ENCODE measurements at regions of chr22 and their contacts with region 1.

Region 1: GRCh38 chr22:21938071-21938822 is 14.4 kb downstream of the PPM1F start:
- DNase-seq: peak; percentile 92 to 98 (median 96)
- H3K4me3 ChIP-seq: peak overlapping the region; percentile 13 to 57 (median 28)
- H3K27ac ChIP-seq: peak overlapping the region; percentile 87 to 98 (median 93)
- H3K4me1 ChIP-seq: peaks cover 39 to 65% of the 10 kb centered on the region in 2 donors
- H3K27me3 ChIP-seq: no peaks in the 10 kb centered on the region
- CTCF ChIP-seq: peak; percentile 96 to 100 (median 100)
- POLR2A ChIP-seq: peak; percentile 6 to 46

Region 2: GRCh38 chr22:21712894-21713712 is 225.1 kb before region 1 on chr22:
- intact Hi-C with region 1: loop called (anchors 5 to 10 kb)
- DNase-seq: peak; percentile 71 to 91 (median 78)
- H3K4me3 ChIP-seq: peak overlapping the region in 1 of 4 donors; percentile 14
- H3K27ac ChIP-seq: peak overlapping the region in 1 of 5 donors; percentile 32
- H3K4me1 ChIP-seq: peaks cover 0 to 12% of the 10 kb centered on the region in 2 donors
- H3K27me3 ChIP-seq: no peaks in the 10 kb centered on the region
- CTCF ChIP-seq: peak; percentile 46 to 96 (median 78)
- POLR2A ChIP-seq: no peak

Region 3: GRCh38 chr22:21778705-21779363 is 159.4 kb before region 1 on chr22:
- intact Hi-C with region 1: loop called in 1 of 2 experiments (anchors 10 kb)
- DNase-seq: peak in 2 of 7 donors; percentile 18 to 36
- H3K4me3 ChIP-seq: no peak overlapping the region
- H3K27ac ChIP-seq: no peak overlapping the region
- H3K4me1 ChIP-seq: peaks cover 0 to 9% of the 10 kb centered on the region in 2 donors
- H3K27me3 ChIP-seq: no peaks in the 10 kb centered on the region
- CTCF ChIP-seq: no peak
- POLR2A ChIP-seq: no peak

Region 4: DNA sequence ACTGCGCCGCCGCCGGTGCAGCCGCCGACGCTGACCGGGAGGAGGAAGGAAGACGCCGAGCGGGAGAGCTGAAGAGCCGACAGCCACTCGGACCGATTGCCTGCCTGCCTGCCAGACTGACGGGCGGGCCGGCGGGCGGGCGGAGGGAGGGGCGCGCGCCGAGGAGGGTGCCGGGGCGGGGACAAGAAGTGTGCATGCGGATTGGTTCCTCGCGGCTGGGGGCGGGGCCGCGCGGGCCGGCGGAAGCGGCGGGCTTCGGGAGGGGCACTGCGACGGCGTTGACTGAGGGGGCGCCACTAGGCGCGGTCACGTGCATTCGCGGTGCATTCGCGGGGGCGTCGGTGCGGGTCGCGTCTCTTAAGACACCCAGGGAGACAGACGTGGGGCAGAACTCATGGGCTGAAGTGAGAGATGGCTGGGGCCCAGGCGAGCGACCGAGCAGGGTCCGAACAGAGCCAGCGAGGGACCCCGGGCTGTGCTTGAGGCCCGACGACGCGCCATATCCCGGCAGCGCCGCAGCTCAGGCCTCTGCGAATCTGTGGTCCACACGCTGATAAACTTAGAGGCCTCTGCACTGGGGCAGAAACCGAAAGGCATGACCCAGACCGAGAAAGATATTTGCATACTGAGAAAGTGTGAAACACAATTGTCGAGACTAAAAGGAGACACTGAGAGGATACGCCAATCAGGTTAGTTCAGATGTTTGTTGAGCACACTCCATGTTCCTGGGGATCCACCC is 70.5 kb before region 1 on chr22 and contains the start of gene MAPK1:
- intact Hi-C with region 1: loop called in 1 of 2 experiments (anchors 10 kb)
- DNase-seq: peak; percentile 90 to 95 (median 93)
- H3K4me3 ChIP-seq: peak within 1 kb of the TSS; percentile 11 to 97 (median 54)
- H3K27ac ChIP-seq: peak within 1 kb of the TSS in 4 of 5 donors; percentile 81 to 97 (median 84)
- H3K4me1 ChIP-seq: peaks cover 0 to 46% of the 10 kb centered on the region in 2 donors
- H3K27me3 ChIP-seq: no peaks in the 10 kb centered on the region
- CTCF ChIP-seq: peak in 5 of 6 experiments; percentile 12 to 48 (median 34)
- POLR2A ChIP-seq: peak; percentile 68 to 86
- total RNA-seq, gene MAPK1: 63.3 to 201 (median 109) TPM